PC-3 (cell line): ENCODE measurements at regions of chrX and their contacts with region 1.

Region 1: DNA sequence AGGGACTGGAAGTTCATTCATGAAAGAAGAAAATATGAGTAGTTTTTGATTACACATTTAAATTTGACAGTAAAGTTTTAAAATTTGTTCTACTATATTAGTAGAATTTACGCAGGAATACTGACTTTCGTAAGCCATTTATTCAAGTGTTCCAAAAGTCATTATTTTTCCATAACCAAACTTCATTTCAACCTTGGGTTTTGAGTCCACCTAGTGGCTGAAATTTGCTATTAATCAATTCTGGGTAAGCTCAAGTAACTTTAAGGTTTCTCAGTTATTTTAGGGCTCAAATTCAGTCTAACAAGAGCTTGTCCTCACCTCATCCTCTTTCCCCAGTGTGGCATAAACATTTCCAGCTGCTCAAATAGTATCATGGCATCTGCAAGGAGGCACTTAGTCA is 175.4 kb downstream of the SH3BGRL start:
- DNase-seq: peak; percentile 63
- ATAC-seq: peak; percentile 33; the same call in 1 of the 2 replicates
- H3K4me3 ChIP-seq: no peak overlapping the region
- H3K27ac ChIP-seq: no peak overlapping the region
- H3K4me1 ChIP-seq: no peaks in the 10 kb centered on the region
- H3K27me3 ChIP-seq: no peaks in the 10 kb centered on the region
- CTCF ChIP-seq: peak; percentile 71

Region 2: DNA sequence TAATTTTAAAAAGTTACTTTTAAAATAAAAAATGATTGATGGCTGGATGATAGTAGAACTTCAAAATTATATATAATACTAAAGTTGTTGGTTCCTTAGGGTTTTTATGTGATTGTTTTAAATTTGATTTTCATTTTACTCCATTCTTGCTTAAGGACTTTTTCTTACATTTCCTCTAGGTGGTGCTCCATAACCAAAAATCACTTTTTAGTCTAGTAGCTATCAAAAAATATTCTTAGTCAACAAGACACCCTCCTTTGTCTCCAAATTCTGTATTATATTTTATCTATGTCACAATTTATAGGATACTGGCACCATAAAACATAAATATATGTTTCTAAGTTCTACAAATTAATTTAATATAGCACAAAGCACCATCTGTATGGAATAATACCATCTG is 500.5 kb before region 1 on chrX:
- CTCF ChIA-PET with region 1: no interaction called
- POLR2A ChIA-PET with region 1: no interaction called
- intact Hi-C with region 1: loop called (anchors 5 kb)
- DNase-seq: peak; percentile 56
- ATAC-seq: no peak
- H3K4me3 ChIP-seq: no peak overlapping the region
- H3K27ac ChIP-seq: no peak overlapping the region
- H3K4me1 ChIP-seq: peaks cover 12% of the 10 kb centered on the region
- H3K27me3 ChIP-seq: no peaks in the 10 kb centered on the region
- CTCF ChIP-seq: peak; percentile 59

Region 3: DNA sequence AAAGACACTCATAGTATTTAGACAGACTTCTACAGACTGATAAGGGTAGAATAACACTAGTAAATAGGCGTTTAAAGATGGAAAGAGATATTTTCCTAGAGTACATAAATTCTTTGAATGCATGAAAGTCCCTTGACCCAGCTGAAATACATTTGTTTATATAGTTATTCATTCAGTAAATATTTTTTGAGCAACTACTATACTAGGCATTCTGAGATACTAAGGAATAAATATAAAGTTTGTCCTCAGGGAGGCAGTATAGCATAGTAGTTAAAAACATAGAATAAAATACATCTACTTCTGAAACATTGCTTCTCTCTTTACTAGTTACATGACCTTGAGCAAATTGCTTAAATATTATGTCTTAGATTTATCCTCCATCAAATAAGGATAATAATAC is 203.0 kb before region 1 on chrX:
- CTCF ChIA-PET with region 1: interaction called, 4 read pairs
- POLR2A ChIA-PET with region 1: no interaction called
- intact Hi-C with region 1: loop called (anchors 1 kb)
- DNase-seq: peak; percentile 71
- ATAC-seq: peak; percentile 79
- H3K4me3 ChIP-seq: no peak overlapping the region
- H3K27ac ChIP-seq: no peak overlapping the region
- H3K4me1 ChIP-seq: no peaks in the 10 kb centered on the region
- H3K27me3 ChIP-seq: no peaks in the 10 kb centered on the region
- CTCF ChIP-seq: peak; percentile 59

Region 4: DNA sequence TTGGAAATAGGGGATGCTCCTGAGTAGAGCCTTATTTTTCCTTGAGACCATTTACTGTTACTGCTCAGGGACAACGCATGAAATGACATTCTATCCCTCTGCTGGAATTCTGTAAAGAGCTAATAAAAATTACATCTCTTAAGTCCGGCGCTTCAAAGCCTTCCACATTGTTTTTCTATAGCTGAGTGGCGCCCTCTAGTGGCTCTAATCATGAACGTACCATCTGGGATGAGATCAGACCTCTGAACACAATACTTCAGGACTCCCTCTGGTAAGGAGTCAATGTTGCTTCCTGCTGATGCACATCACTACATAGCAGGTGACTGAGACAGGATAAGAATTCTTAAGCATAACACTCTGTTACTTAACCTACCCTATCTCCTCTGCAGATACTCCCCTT is 181.6 kb before region 1 on chrX:
- CTCF ChIA-PET with region 1: no interaction called
- POLR2A ChIA-PET with region 1: no interaction called
- intact Hi-C with region 1: loop called (anchors 2 kb)
- DNase-seq: peak; percentile 75
- ATAC-seq: peak; percentile 77
- H3K4me3 ChIP-seq: no peak overlapping the region
- H3K27ac ChIP-seq: no peak overlapping the region
- H3K4me1 ChIP-seq: no peaks in the 10 kb centered on the region
- H3K27me3 ChIP-seq: no peaks in the 10 kb centered on the region
- CTCF ChIP-seq: peak; percentile 82